ENCODE measurements at regions of chr13 and their contacts with region 1.

Region 1: DNA sequence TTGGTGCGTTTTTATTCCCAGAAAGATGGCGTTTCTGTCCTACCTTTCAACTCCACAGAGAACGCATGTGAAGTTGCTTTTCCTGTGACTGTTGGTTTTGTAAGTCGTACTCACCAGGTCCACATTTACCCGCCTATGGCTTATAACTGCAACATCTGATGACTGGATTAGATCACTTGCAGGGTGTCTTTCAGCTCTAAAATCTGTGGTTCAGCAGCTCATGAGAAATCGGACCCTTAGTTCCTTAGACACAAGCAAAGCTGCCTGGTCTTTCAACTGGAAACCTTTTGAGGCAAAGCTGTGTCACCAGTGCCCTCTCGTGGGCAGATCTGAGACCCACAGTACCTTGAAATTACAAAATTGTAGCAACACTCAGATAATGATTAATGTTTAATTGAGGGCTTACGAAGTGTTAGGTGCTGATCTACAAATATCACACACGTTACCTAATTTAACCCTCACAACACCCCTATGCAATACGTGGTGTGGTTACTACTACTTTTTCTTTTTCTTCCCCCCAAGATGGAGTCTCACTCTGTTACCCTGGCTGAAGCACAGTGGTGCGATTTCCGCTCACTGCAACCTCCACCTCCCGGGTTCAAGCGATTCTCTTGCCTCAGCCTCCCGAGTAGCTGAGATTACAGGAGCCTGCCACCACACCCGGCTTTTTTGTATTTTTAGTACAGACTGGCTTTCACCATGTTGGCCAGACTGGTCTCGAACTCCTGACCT is 65.4 kb downstream of the RUBCNL start:
- DNase-seq: peak in 8 of 10 donors; percentile 10 to 71 (median 52)
- H3K4me3 ChIP-seq: peak overlapping the region in 1 of 59 donors; percentile 2
- H3K27ac ChIP-seq: peak overlapping the region in 1 of 59 donors; percentile 13
- H3K27me3 ChIP-seq: peaks cover 0 to 5% (median 0%) of the 10 kb centered on the region in 45 donors
- CTCF ChIP-seq: peak; percentile 38 to 81 (median 71)

Region 2: DNA sequence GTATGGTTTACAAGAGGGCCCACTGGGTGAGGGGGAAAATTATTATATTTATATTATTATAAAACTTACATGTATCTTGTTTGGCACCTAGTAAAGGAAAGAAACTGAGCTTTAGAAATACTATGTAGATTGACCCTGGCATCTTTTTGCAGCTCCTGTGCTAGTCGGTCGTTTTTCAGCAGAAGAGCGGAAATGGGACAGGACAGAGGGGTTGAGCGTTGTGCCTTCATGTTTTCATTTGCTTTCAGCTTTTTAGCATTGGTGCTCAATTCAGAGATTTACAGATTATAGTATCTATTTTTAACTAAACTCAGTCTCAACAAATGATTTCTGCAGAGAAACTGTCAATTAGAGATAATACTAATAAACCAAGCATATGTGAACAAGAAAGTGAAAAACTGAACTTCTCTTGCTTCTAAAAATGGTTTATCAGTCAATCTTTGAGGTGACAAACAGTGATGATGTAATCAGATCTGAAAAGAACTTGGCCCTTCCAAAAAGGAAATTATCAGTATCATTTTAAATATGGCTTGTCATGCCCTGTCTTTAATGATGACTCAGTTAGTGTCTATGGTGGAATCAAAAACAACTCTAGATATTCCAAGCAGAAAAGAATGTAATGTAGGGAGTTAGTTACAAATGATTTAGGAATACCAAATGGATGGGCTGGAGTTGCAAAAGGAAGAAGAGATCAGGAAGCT is 1063.9 kb before region 1 on chr13:
- intact Hi-C with region 1: no loop called
- DNase-seq: no peak
- H3K4me3 ChIP-seq: no peak overlapping the region
- H3K27ac ChIP-seq: no peak overlapping the region
- H3K27me3 ChIP-seq: no peaks in the 10 kb centered on the region
- CTCF ChIP-seq: no peak

Region 3: GRCh38 chr13:45370922-45371406 is 950.7 kb before region 1 on chr13:
- intact Hi-C with region 1: loop called in 1 of 2 experiments (anchors 5 kb)
- DNase-seq: peak; percentile 30 to 82 (median 49)
- H3K4me3 ChIP-seq: peak overlapping the region in 30 of 59 donors; percentile 0 to 45 (median 24)
- H3K27ac ChIP-seq: peak overlapping the region in 1 of 59 donors; percentile 68
- H3K27me3 ChIP-seq: no peaks in the 10 kb centered on the region
- CTCF ChIP-seq: peak; percentile 67 to 96 (median 91)

Region 4: GRCh38 chr13:45807520-45808099 is 514.0 kb before region 1 on chr13:
- intact Hi-C with region 1: loop called in 1 of 2 experiments (anchors 5 kb)
- DNase-seq: peak in 3 of 10 donors; percentile 21 to 60 (median 57)
- H3K4me3 ChIP-seq: no peak overlapping the region
- H3K27ac ChIP-seq: no peak overlapping the region
- H3K27me3 ChIP-seq: no peaks in the 10 kb centered on the region
- CTCF ChIP-seq: peak; percentile 17 to 83 (median 66)

Region 5: DNA sequence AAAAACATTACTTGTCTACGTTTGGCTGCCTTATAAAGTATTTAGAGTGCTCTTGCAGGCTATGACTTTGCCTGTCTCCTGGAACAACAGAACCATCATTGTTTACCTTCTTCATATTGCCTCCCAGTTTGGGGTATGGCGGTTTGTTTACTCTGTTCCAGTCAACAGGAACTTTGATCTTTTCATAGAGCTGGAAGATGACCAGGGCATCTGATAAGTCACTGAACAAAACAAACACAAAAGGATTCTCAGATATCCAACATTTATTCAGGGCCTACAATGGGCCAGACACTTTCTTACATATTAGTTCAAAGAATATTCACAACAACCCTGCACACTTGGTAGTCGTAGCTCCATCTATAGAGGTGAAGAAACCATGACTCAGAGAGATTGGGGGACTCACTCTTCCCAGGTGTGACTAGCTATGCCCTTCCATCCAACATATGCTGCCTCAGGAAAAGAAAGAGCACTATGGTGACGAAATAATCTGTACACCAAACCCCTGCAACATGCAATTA is 178.4 kb before region 1 on chr13:
- intact Hi-C with region 1: no loop called
- DNase-seq: no peak
- H3K4me3 ChIP-seq: peak overlapping the region in 6 of 59 donors; percentile 1 to 35 (median 10)
- H3K27ac ChIP-seq: peak overlapping the region in 15 of 59 donors; percentile 8 to 55 (median 29)
- H3K27me3 ChIP-seq: peaks cover 0 to 4% (median 0%) of the 10 kb centered on the region in 45 donors
- CTCF ChIP-seq: no peak

Region 6: DNA sequence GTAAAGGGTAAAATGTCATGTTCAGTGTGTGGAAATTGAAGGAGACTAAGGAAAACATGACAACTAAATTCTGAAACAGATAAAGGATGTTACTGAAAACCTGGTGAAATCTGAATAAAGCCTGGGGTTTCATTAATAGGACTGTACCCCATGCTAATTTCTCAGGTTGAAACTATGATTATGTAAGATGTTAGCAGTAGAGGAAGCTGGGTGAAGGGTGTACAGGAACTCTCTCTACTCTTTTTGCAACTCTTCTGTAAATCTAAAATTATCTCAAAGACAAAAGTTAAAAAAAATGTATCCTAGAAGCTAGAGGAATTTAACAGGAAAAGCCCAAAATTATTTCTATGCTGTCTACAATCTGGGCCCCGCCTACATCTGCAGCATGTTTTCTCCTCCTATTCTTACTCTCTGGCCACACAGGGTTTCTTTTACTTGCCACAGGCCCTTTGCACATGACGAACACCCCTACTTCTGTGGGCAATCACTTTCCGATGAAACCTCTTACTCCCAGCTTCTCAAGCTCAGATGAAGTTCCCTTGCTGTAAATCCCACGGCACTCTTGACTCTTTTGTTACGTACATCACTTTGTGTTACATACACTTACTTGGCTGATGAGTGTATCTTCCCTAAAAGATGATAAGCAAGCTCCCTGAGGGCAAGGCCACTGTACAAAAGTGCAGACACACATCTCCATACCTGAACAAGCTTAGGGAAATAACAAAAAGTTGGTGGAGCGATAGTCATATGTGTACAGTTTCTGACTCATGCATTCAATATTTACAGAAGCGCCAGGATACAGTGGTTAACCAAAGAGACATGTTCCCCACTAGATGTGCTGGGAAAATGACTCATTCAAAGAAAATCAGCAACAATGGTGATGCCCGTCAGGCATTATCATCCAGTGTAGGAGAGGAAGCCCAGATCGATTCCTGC is 32.8 kb after region 1 on chr13:
- intact Hi-C with region 1: no loop called
- DNase-seq: no peak
- H3K4me3 ChIP-seq: no peak overlapping the region
- H3K27ac ChIP-seq: no peak overlapping the region
- H3K27me3 ChIP-seq: no peaks in the 10 kb centered on the region
- CTCF ChIP-seq: no peak

Region 7: GRCh38 chr13:46387064-46387851 is 65.6 kb after region 1 on chr13 and contains the start of gene RUBCNL:
- intact Hi-C with region 1: no loop called
- DNase-seq: peak in 6 of 10 donors; percentile 44 to 68 (median 59)
- H3K4me3 ChIP-seq: peak within 1 kb of the TSS; percentile 48 to 83 (median 65)
- H3K27ac ChIP-seq: peak within 1 kb of the TSS in 51 of 59 donors; percentile 27 to 90 (median 69)
- H3K27me3 ChIP-seq: peaks cover 0 to 22% (median 0%) of the 10 kb centered on the region in 45 donors
- CTCF ChIP-seq: peak in 2 of 56 donors; percentile 8 to 11
- total RNA-seq, gene RUBCNL: 2.7 to 14.6 (median 7.8) TPM

Measured in dorsolateral prefrontal cortex (tissue), 120 donors.